ENCODE measurements at regions of chr1 and their contacts with region 1.

Region 1: DNA sequence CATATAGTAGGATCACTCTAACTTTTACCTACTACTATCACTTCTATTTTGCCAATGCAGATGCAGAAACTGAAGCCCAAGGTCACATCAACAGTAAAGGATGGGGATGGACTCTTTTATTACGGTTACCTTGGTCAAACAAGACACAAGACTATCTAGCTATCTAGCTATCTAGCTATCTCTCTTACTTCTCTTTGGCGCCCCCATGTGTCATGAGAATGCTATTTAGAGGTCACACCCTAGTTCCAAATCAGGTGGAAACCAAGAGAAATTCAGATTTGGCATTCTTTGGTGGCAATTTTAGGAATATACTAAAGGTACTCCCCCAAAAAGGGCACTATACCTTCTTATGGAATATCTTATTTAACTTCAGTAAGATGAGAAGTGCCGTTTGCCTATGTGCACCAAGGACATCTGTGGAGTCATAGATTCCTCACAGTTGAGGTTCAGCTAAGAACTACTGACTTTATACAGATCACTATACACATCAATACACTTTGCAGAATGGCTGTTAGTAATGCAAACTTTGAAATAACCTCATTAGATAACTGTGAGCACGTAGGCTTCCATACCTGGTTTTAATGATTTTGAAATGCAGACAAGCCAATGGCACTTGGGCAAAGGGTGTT is 6.7 kb downstream of the ZNF648 start:
- DNase-seq: peak in 1 of 2 experiments; percentile 77
- H3K4me3 ChIP-seq: no peak overlapping the region
- H3K27ac ChIP-seq: no peak overlapping the region
- H3K4me1 ChIP-seq: no peaks in the 10 kb centered on the region; a peak in 1 of 7 replicates
- H3K27me3 ChIP-seq: peaks cover 0 to 13% (median 7%) of the 10 kb centered on the region in 4 experiments; a peak in 3 of 7 replicates
- CTCF ChIP-seq: peak in 2 of 3 experiments; percentile 55 to 74; a peak in 2 of 4 replicates
- EP300 ChIP-seq: no peak
- POLR2A ChIP-seq: no peak
- RAD21 ChIP-seq: peak; percentile 76 to 78

Region 2: DNA sequence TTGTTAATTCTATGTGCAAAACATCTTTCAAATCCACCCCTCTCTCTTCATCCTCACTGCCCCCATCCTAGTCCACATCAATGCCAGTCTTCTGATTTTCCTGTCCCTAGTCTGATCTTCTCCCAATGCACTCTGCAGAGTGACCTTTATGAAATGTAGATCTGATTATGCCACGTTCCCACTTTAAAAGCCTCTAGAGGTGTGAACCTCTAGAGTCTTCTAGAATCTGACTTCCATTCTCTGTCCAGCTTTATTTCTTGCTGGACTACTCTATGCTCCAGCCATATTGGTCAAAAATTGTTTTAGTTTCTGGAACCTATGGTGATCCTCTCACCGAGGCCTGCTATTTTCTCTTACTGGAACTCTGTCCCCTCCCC is 25.8 kb before region 1 on chr1:
- CTCF ChIA-PET with region 1: interaction called, 10 read pairs
- POLR2A ChIA-PET with region 1: no interaction called
- DNase-seq: no peak
- H3K4me3 ChIP-seq: peak overlapping the region; percentile 61 to 79 (median 74)
- H3K27ac ChIP-seq: peak overlapping the region; percentile 61
- H3K4me1 ChIP-seq: peaks cover 0 to 4% (median 2%) of the 10 kb centered on the region in 4 experiments; a peak in 3 of 7 replicates
- H3K27me3 ChIP-seq: no peaks in the 10 kb centered on the region; a peak in 1 of 7 replicates
- CTCF ChIP-seq: no peak
- EP300 ChIP-seq: no peak
- POLR2A ChIP-seq: no peak
- RAD21 ChIP-seq: no peak

Region 3: GRCh38 chr1:182035097-182035782 is 19.6 kb before region 1 on chr1:
- CTCF ChIA-PET with region 1: interaction called, 17 read pairs
- POLR2A ChIA-PET with region 1: interaction called, 4 read pairs
- DNase-seq: peak in 1 of 2 experiments; percentile 68
- H3K4me3 ChIP-seq: no peak overlapping the region
- H3K27ac ChIP-seq: no peak overlapping the region
- H3K4me1 ChIP-seq: no peaks in the 10 kb centered on the region; a peak in 1 of 7 replicates
- H3K27me3 ChIP-seq: no peaks in the 10 kb centered on the region; a peak in 1 of 7 replicates
- CTCF ChIP-seq: peak; percentile 34 to 59 (median 53); a peak in 3 of 4 replicates
- EP300 ChIP-seq: no peak
- POLR2A ChIP-seq: no peak
- RAD21 ChIP-seq: peak in 1 of 2 experiments; percentile 31; a peak in 2 of 4 replicates

Region 4: DNA sequence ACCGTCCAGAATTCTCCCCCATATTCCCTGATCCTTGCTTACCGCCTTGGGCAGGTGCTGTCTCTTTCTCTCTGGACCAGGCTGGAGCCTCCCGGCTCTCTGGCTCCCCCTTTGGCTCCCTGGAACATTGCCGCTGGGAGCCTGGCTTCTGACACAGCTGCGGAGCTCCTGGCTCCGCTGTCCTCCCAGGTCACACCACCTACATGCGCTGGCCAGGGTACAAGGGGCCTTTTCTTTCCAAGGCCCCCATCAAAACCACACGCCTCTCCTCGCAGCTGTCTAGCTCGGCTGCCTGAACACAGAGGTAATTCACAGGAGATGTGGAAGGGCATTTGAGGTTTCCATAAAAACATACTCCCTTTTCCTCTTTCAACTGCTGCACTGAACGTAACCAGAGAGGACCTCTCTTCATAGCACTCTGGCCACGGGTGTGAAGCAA is 14.2 kb after region 1 on chr1:
- CTCF ChIA-PET with region 1: interaction called, 48 read pairs
- POLR2A ChIA-PET with region 1: no interaction called
- DNase-seq: peak; percentile 75 to 92
- H3K4me3 ChIP-seq: peak overlapping the region in 1 of 4 experiments; percentile 38; a peak in 2 of 8 replicates
- H3K27ac ChIP-seq: no peak overlapping the region
- H3K4me1 ChIP-seq: peaks cover 0 to 6% (median 0%) of the 10 kb centered on the region in 4 experiments; a peak in 2 of 7 replicates
- H3K27me3 ChIP-seq: peaks cover 0 to 7% (median 4%) of the 10 kb centered on the region in 4 experiments; a peak in 4 of 7 replicates
- CTCF ChIP-seq: peak; percentile 77 to 85 (median 84)
- EP300 ChIP-seq: no peak
- POLR2A ChIP-seq: no peak
- RAD21 ChIP-seq: peak; percentile 56 to 70

Region 5: DNA sequence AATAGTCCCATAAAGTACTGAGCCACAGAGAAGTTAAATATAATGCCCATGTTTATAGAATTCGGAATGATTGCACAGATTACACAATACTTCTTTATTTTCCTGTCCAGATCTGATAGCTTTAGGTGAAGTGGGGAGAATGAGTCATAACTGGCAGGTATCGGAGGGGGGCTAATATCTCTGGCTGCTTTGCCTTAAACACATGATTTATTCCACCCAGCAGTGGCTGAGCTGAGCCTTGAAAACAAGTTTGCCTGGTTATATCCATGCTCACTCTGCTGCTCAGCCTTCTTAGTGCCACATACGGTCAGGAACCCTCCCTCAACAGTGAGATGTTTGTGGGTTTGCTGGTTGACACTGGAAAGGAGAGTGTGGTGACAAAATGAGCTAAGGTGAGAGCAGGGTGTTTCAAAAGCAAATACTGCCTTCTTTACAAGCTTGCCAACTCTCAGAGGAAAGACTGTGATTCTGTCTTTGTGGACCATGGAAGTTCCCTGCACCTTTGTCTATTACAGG is 126.4 kb after region 1 on chr1:
- CTCF ChIA-PET with region 1: no interaction called
- POLR2A ChIA-PET with region 1: no interaction called
- DNase-seq: no peak
- H3K4me3 ChIP-seq: no peak overlapping the region
- H3K27ac ChIP-seq: no peak overlapping the region
- H3K4me1 ChIP-seq: no peaks in the 10 kb centered on the region
- H3K27me3 ChIP-seq: no peaks in the 10 kb centered on the region
- CTCF ChIP-seq: no peak
- EP300 ChIP-seq: no peak
- POLR2A ChIP-seq: no peak
- RAD21 ChIP-seq: no peak

Measured in H1 (cell line).